ENCODE measurements at regions of chr10 and their contacts with region 1.

Region 1: DNA sequence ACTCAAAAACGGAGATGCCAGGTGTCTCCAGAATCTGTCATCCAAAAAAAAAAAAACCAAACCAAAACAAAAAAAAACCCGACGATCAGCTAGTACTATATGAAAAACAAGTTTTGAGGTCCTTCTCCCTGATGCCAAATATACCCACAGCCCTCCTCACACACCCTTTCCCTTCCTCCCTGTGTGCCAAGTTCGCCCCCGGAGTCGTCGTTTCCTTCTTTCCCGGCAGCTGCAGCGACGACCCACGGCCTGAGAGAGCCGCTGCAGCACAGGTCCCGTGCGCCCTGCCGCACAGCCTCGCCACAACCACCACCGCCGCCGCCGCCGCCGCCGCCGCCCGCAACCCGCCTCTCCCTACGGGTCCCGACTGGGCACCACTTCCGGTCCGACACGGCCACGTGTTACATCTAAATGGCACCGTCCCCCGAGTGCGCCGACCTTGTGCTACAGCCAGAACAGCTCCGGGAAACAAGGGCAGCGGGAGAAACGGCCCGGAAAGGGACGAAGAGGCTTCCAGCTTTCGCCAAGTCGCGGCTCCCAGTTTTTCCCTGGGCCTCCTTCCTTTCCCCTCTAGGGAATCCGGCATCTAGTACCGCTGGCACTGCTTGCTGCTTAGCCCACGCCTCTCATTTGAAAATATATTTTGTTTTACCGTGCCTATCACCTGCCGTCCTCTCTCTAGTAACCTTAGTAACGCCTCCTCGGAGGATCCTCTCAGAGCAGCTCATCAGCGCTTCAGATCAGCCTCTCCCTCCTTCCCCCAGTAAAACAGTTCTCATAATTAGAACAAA is at the start of gene FRA10AC1:
- DNase-seq: peak; percentile 92
- ATAC-seq: peak; percentile 99
- total RNA-seq, gene FRA10AC1: 14.8 to 16.5 TPM

Region 2: GRCh38 chr10:93816123-93816747 is 113.8 kb after region 1 on chr10:
- intact Hi-C with region 1: loop called in 1 of 2 experiments (anchors 5 kb)
- DNase-seq: peak; percentile 74
- ATAC-seq: peak; percentile 92